ENCODE measurements at regions of chr1 and their contacts with region 1.

Region 1: DNA sequence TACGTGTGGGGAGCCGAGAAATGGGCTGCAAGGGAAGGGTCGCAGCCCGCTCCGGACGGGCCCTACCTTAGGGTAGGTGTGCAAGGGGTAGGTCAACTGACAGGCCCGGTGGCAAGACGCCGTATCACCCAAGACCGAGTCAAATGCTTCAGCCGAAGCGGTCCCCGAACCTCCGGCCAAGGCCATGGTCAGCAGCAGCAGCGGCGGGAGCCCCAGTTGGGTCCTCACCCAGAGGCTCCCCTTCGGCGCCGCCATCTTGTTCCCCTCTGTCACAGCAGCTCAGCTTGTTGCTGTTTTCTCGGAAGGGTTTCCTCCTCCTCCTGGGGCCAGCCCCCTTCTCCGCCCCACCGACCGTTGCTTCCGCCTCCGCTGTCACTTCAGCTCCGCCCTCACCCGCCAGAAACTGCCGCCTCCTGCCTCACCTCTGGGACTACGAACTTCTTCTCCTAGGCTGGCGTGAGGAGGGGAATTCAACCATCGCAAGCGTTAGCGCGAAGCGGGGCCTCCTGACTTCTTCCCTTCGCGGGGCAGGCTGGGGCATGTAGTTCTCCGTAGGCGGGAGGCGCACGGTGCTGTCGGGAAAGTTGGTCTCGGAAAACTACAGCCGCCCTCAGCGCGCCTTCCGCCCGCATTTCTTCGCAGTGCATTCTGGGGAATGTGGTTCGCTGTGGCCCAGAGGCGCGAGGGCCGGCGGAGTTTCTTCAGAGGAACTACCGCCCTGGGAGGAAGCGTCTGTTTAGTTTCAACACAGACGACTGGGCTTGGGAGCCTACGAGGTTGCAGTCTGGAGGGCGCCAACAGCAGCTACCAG is at the starts of genes TCEANC2 and TMEM59:
- DNase-seq: peak; percentile 99
- total RNA-seq, gene TCEANC2: 4.1 TPM
- total RNA-seq, gene TMEM59: 289 TPM

Region 2: DNA sequence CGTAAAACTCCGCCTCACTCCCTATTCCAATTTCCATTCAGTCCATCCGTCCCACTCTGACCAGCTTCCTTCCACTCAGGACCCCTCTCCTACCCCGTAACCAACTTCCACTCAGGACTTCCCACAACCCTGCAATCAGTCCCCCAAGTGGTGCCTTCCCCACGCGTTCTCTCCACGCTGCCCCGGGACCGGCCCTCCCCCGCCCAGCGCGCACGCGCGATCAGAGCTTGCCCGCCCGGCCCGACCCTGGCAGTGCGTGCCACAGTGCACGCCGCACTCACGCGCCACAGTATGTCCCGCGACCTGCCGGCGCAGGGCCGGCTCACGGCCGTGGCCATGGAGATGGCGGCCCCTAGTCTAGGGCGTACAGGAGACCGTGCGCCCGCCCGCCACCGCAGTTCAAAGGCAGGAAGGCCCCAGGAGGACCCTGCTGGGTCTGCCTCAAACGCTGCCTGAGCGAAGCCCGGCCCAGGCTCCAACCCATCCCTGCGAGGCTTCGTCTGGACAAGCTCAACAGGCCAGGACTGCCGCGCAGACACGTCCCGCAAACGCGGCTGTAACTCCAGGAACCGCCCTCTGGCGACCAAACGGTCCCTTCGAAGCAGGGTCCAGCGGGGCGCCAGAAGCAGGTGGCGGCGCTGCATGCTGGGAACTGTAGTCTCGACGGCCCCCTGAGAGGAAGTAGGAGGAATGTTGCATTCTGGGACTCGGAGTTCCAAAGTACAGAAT is 215.1 kb before region 1 on chr1 and contains the start of gene NDC1:
- intact Hi-C with region 1: loop called (anchors 1 kb)
- DNase-seq: peak; percentile 93
- total RNA-seq, gene NDC1: 6.0 TPM

Region 3: GRCh38 chr1:53889304-53890298 is 163.5 kb before region 1 on chr1 and contains the start of gene YIPF1:
- intact Hi-C with region 1: loop called (anchors 5 kb)
- DNase-seq: peak; percentile 96
- total RNA-seq, gene YIPF1: 13.4 TPM

Region 4: DNA sequence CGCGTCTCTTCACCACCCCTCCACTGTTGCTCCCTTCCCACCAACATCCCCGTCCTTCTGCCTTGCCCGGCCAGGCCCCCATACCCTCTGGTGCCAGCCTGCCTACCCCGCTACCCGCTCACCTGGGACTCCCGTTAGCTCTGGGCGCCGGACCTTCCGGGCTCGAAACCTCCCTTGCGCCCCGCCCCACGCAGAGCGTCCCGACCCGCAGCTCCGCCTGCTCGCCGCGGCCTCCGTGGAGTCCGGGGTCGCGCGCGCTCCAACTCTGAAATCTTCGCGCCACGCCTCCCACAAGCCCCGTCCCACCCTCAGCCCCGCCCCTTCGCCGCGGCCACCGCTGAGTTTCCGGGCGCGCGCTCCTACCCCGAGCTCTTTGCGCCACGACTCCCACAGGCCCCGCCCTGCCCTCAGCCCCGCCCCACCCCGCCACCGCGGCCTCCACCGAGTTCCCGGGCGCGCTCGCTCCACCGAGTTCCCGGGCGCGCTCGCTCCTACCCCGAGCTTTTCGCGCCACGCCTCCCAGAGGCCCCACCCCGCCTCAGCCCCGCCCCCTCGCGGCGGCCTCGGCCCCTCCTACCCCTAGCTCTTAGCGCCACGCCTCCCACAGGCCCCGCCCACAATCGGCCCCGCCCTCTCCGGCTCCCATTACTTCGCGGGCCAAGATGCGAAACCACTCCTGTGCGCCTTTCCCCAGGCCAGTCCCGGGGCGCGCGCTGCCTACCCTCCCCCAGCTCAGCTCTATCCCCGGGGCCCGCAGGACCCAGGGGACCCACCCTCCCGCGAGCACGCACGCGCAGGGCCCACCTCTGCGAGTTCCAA is 107.5 kb before region 1 on chr1 and contains the start of gene IFT25:
- intact Hi-C with region 1: loop called (anchors 5 kb)
- DNase-seq: peak; percentile 99
- total RNA-seq, gene IFT25: 11.1 TPM

Measured in cardiac septum (tissue), 1 donor.